ENCODE measurements at regions of chr2 and their contacts with region 1.

Region 1: GRCh38 chr2:60550178-60550983 is 3.1 kb downstream of the BCL11A start:
- DNase-seq: peak; percentile 92
- H3K4me3 Mint-ChIP-seq: peak overlapping the region; percentile 88
- H3K27ac Mint-ChIP-seq: no peak overlapping the region
- H3K4me1 Mint-ChIP-seq: peaks cover 10% of the 10 kb centered on the region
- H3K27me3 Mint-ChIP-seq: no peaks in the 10 kb centered on the region
- CTCF ChIP-seq: peak; percentile 77

Region 2: GRCh38 chr2:58571181-58571852 is 1979.1 kb before region 1 on chr2:
- CTCF ChIA-PET with region 1: no interaction called
- POLR2A ChIA-PET with region 1: no interaction called
- intact Hi-C with region 1: loop called (anchors 2 kb)
- DNase-seq: peak; percentile 88
- H3K4me3 Mint-ChIP-seq: no peak overlapping the region
- H3K27ac Mint-ChIP-seq: peak overlapping the region; percentile 75
- H3K4me1 Mint-ChIP-seq: peaks cover 18% of the 10 kb centered on the region
- H3K27me3 Mint-ChIP-seq: no peaks in the 10 kb centered on the region
- CTCF ChIP-seq: peak; percentile 87

Region 3: DNA sequence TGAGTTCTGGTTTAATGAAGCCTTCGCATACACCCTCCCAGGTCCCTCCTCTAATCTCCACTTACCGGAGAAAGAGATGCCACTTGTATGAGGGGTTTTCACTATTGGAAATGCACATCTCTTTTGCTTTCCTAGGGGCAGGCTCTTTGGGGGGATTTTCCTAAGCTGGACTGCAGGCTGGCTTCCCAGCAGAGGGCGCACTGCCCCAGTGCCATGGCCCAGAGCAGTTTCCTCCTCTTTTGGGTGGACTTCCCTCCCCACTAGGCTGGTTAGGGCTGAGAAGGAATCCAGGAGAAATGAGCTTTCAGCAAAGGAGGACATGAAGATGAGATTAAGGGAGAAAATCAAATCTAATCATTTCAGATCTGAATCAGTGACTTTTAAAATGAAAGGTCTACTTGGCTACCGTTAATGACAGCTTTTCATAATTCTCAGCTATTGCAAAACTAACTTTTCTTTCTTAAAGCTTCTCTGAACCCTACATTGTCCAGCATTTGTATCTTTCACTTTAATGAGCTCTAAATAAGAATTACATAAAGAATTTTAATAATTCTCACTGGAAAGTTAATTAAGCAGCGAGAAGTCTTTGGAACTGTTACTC is 1525.1 kb before region 1 on chr2:
- CTCF ChIA-PET with region 1: interaction called, 12 read pairs
- POLR2A ChIA-PET with region 1: no interaction called
- intact Hi-C with region 1: loop called (anchors 5 kb)
- DNase-seq: peak; percentile 41
- H3K4me3 Mint-ChIP-seq: no peak overlapping the region
- H3K27ac Mint-ChIP-seq: no peak overlapping the region
- H3K4me1 Mint-ChIP-seq: no peaks in the 10 kb centered on the region
- H3K27me3 Mint-ChIP-seq: no peaks in the 10 kb centered on the region
- CTCF ChIP-seq: peak; percentile 63

Region 4: GRCh38 chr2:59449269-59449668 is 1101.1 kb before region 1 on chr2:
- CTCF ChIA-PET with region 1: interaction called, 22 read pairs
- POLR2A ChIA-PET with region 1: interaction called, 4 read pairs
- intact Hi-C with region 1: loop called (anchors 1 kb)
- DNase-seq: peak; percentile 51
- H3K4me3 Mint-ChIP-seq: no peak overlapping the region
- H3K27ac Mint-ChIP-seq: no peak overlapping the region
- H3K4me1 Mint-ChIP-seq: no peaks in the 10 kb centered on the region
- H3K27me3 Mint-ChIP-seq: no peaks in the 10 kb centered on the region
- CTCF ChIP-seq: peak; percentile 25

Region 5: GRCh38 chr2:59789505-59789904 is 760.9 kb before region 1 on chr2:
- CTCF ChIA-PET with region 1: no interaction called
- POLR2A ChIA-PET with region 1: no interaction called
- intact Hi-C with region 1: no loop called
- DNase-seq: no peak
- H3K4me3 Mint-ChIP-seq: no peak overlapping the region
- H3K27ac Mint-ChIP-seq: no peak overlapping the region
- H3K4me1 Mint-ChIP-seq: peaks cover 9% of the 10 kb centered on the region
- H3K27me3 Mint-ChIP-seq: no peaks in the 10 kb centered on the region
- CTCF ChIP-seq: no peak

Region 6: GRCh38 chr2:59888015-59888414 is 662.4 kb before region 1 on chr2:
- CTCF ChIA-PET with region 1: no interaction called
- POLR2A ChIA-PET with region 1: no interaction called
- intact Hi-C with region 1: loop called (anchors 10 kb)
- DNase-seq: no peak
- H3K4me3 Mint-ChIP-seq: no peak overlapping the region
- H3K27ac Mint-ChIP-seq: peak overlapping the region; percentile 7
- H3K4me1 Mint-ChIP-seq: peaks cover 32% of the 10 kb centered on the region
- H3K27me3 Mint-ChIP-seq: no peaks in the 10 kb centered on the region
- CTCF ChIP-seq: no peak

Region 7: GRCh38 chr2:60260639-60261296 is 289.6 kb before region 1 on chr2:
- CTCF ChIA-PET with region 1: interaction called, 3 read pairs
- POLR2A ChIA-PET with region 1: interaction called, 6 read pairs
- intact Hi-C with region 1: loop called (anchors 5 kb)
- DNase-seq: peak; percentile 96
- H3K4me3 Mint-ChIP-seq: no peak overlapping the region
- H3K27ac Mint-ChIP-seq: peak overlapping the region; percentile 8
- H3K4me1 Mint-ChIP-seq: peaks cover 12% of the 10 kb centered on the region
- H3K27me3 Mint-ChIP-seq: no peaks in the 10 kb centered on the region
- CTCF ChIP-seq: no peak

Region 8: GRCh38 chr2:60608679-60609078 is 58.3 kb after region 1 on chr2:
- CTCF ChIA-PET with region 1: no interaction called
- POLR2A ChIA-PET with region 1: no interaction called
- intact Hi-C with region 1: no loop called
- DNase-seq: no peak
- H3K4me3 Mint-ChIP-seq: no peak overlapping the region
- H3K27ac Mint-ChIP-seq: no peak overlapping the region
- H3K4me1 Mint-ChIP-seq: no peaks in the 10 kb centered on the region
- H3K27me3 Mint-ChIP-seq: no peaks in the 10 kb centered on the region
- CTCF ChIP-seq: no peak

Region 9: DNA sequence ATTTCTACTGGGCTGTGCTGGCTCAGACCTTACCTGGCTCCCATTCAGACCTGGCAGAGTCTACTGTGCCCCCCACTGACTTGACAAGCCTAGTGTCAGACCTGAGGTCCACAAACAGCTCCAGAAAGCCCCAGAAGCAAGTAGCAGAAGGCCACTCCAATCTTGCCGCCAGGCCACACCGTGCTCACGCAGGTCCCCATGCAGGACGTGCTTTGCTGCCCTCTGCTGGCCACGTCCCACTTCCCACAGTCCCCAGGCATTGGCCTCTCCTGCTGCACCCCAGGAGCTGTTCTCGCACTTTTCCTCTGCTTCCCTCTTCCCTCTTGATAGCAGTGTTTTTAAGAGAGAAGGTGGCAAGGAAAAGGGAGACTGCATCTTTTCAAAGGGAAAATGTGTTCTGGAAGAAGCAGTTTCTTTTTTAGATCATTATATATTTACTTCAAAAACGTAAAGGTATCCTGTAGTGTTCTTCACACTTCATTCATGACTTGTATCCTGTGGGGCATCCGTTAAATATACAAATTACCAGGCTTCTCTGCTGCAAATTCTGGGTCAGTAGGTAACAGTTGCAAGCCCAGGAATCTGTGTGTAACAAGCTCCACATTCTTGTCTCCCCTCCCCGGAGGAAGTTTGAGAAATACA is 124.3 kb after region 1 on chr2:
- CTCF ChIA-PET with region 1: interaction called, 12 read pairs
- POLR2A ChIA-PET with region 1: interaction called, 4 read pairs
- intact Hi-C with region 1: no loop called
- DNase-seq: peak; percentile 77
- H3K4me3 Mint-ChIP-seq: no peak overlapping the region
- H3K27ac Mint-ChIP-seq: no peak overlapping the region
- H3K4me1 Mint-ChIP-seq: peaks cover 11% of the 10 kb centered on the region
- H3K27me3 Mint-ChIP-seq: peaks cover 21% of the 10 kb centered on the region
- CTCF ChIP-seq: peak; percentile 83

Region 10: GRCh38 chr2:60899230-60899891 is 349.0 kb after region 1 on chr2:
- CTCF ChIA-PET with region 1: no interaction called
- POLR2A ChIA-PET with region 1: no interaction called
- intact Hi-C with region 1: no loop called
- DNase-seq: no peak
- H3K4me3 Mint-ChIP-seq: no peak overlapping the region
- H3K27ac Mint-ChIP-seq: no peak overlapping the region
- H3K4me1 Mint-ChIP-seq: peaks cover 6% of the 10 kb centered on the region
- H3K27me3 Mint-ChIP-seq: no peaks in the 10 kb centered on the region
- CTCF ChIP-seq: no peak

Measured in MCF 10A (cell line).